ENCODE measurements at regions of chr5 and their contacts with region 1.

Region 1: GRCh38 chr5:102583276-102584124 is 84.7 kb upstream of the SLCO6A1 start:
- DNase-seq: no peak
- H3K4me3 Mint-ChIP-seq: no peak overlapping the region
- H3K27ac Mint-ChIP-seq: no peak overlapping the region
- H3K4me1 Mint-ChIP-seq: peaks cover 1% of the 10 kb centered on the region
- H3K27me3 Mint-ChIP-seq: peaks cover 8% of the 10 kb centered on the region

Region 2: GRCh38 chr5:102670224-102670836 is 86.8 kb after region 1 on chr5:
- CTCF ChIA-PET with region 1: no interaction called
- POLR2A ChIA-PET with region 1: no interaction called
- intact Hi-C with region 1: loop called (anchors 10 kb)
- DNase-seq: no peak
- H3K4me3 Mint-ChIP-seq: no peak overlapping the region
- H3K27ac Mint-ChIP-seq: no peak overlapping the region
- H3K4me1 Mint-ChIP-seq: no peaks in the 10 kb centered on the region
- H3K27me3 Mint-ChIP-seq: peaks cover 9% of the 10 kb centered on the region

Region 3: DNA sequence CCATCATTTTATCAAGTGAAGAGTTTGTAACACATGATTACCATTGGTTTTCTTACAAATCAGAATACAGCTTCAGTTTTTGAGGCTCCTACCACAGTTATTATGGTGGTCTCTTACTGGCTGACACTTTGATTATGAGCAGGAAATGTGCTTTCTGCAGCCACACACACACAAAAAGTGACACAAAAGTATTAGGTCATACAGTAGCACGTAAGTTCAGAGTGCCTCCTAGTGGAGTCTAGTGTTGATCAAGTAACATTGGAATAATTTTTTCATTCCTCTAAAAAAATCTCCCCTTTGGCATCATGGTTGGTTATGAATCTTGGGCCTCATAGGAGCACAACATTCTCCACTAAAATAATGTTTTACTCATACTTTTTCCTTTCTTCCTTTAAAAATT is 209.2 kb after region 1 on chr5:
- CTCF ChIA-PET with region 1: interaction called, 5 read pairs
- POLR2A ChIA-PET with region 1: no interaction called
- intact Hi-C with region 1: loop called (anchors 2 kb)
- DNase-seq: no peak
- H3K4me3 Mint-ChIP-seq: no peak overlapping the region
- H3K27ac Mint-ChIP-seq: no peak overlapping the region
- H3K4me1 Mint-ChIP-seq: peaks cover 14% of the 10 kb centered on the region
- H3K27me3 Mint-ChIP-seq: no peaks in the 10 kb centered on the region

Region 4: DNA sequence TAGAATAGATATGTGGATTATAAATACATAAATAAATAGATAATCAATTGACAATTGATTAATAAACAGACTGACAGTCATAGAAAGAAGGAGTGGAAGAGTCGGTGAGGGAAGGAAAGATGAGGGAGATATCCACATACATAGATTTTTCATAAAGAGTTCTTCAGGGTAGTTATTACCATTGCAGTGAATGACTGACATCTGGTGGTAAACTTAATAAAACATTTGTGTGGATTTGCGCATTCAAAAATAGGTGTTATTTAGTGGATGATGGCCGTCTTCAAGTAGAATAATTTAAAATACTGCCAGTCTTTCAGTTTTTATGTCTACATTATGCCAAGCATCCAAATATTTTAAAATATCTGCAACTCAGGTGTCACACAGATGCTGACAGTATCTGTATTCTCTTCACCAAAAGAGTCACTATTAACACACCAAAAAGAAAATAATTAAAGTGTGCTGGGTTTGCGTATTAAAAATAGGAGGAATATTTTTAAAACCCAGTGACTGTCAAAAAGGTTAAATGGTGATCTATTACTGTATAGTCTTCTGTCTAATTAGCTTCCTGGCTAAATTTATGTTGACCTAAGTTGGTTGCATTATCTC is 457.7 kb after region 1 on chr5:
- CTCF ChIA-PET with region 1: interaction called, 3 read pairs
- POLR2A ChIA-PET with region 1: no interaction called
- intact Hi-C with region 1: loop called (anchors 1 kb)
- DNase-seq: no peak
- H3K4me3 Mint-ChIP-seq: no peak overlapping the region
- H3K27ac Mint-ChIP-seq: no peak overlapping the region
- H3K4me1 Mint-ChIP-seq: no peaks in the 10 kb centered on the region
- H3K27me3 Mint-ChIP-seq: peaks cover 2% of the 10 kb centered on the region

Measured in activated CD4-positive, alpha-beta memory T cell treated with anti-CD3 and anti-CD28 coated beads for 36 hours (primary cell).